ENCODE measurements at regions of chr1 and their contacts with region 1.

Region 1: GRCh38 chr1:222171005-222171404 is 376.9 kb downstream of the HHIPL2 start:
- DNase-seq: peak; percentile 31
- CTCF ChIP-seq: peak; percentile 51

Region 2: GRCh38 chr1:221478050-221478949 is 692.7 kb before region 1 on chr1:
- in situ Hi-C with region 1: loop called (anchors 25 kb)
- DNase-seq: peak; percentile 22
- CTCF ChIP-seq: peak; percentile 64

Region 3: DNA sequence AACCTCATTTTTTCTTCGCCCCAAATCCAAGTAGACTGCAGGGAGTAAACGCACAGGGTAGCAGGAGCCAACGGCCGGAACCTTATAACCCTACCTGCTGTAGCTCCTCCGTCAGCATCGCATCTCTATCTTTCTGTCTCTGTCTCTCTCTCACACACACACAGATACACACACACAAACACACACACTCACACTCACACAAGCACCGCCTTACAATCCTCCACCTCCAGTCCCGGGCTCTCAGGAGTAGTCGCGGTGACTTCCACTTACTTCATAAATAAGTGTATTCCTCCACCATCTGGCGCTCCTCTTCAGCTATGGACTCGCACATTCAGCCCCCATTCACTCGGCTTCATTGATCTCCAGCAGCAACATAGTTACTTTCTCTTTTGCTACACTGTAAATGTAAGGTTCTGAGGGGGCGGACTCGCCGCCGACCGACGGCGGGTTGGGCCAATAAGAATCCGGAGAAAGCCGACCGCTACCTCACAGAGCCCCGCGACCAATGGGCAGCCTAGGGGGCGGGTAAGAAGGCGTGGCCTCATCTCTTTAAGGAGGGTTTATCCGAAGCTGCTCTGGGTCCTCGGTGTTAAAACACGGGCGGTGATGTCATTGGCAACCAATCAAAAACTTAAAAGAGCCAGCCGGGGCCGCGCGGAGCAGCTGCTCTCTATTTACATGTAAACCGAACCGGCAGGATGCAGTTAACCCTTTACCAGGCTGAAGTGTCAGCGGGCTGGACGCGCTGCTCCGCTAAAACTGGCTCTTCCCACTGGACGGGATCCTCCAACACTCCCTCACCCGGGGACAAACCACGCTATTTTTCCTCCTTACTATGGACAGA is 429.1 kb before region 1 on chr1 and contains the start of gene DUSP10:
- in situ Hi-C with region 1: loop called (anchors 25 kb)
- DNase-seq: peak; percentile 99
- CTCF ChIP-seq: no peak